GM12878 (cell line): ENCODE measurements at regions of chr13 and their contacts with region 1.

Region 1: GRCh38 chr13:102724923-102725322 is 30.1 kb upstream of the METTL21C start:
- DNase-seq: no peak
- ATAC-seq: peak; percentile 69
- H3K4me3 ChIP-seq: no peak overlapping the region
- H3K27ac ChIP-seq: no peak overlapping the region
- H3K4me1 ChIP-seq: no peaks in the 10 kb centered on the region
- H3K27me3 ChIP-seq: no peaks in the 10 kb centered on the region; a peak in 1 of 4 replicates
- CTCF ChIP-seq: peak; percentile 22 to 49 (median 38); a peak in 4 of 6 replicates
- EP300 ChIP-seq: no peak
- POLR2A ChIP-seq: no peak
- RAD21 ChIP-seq: peak; percentile 54

Region 2: GRCh38 chr13:102580552-102581169 is 144.3 kb before region 1 on chr13:
- CTCF ChIA-PET with region 1: interaction called, 6 read pairs
- POLR2A ChIA-PET with region 1: no interaction called
- RAD21 ChIA-PET with region 1: interaction called, 4 read pairs
- SMC1A ChIA-PET with region 1: interaction called, 7 read pairs
- in situ Hi-C with region 1: no loop called
- intact Hi-C with region 1: loop called (anchors 2 kb)
- DNase-seq: no peak
- ATAC-seq: peak; percentile 89
- H3K4me3 ChIP-seq: no peak overlapping the region
- H3K27ac ChIP-seq: no peak overlapping the region
- H3K4me1 ChIP-seq: peaks cover 6% of the 10 kb centered on the region
- H3K27me3 ChIP-seq: no peaks in the 10 kb centered on the region
- CTCF ChIP-seq: peak; percentile 68 to 79 (median 71)
- EP300 ChIP-seq: no peak
- POLR2A ChIP-seq: no peak
- RAD21 ChIP-seq: peak; percentile 90

Region 3: DNA sequence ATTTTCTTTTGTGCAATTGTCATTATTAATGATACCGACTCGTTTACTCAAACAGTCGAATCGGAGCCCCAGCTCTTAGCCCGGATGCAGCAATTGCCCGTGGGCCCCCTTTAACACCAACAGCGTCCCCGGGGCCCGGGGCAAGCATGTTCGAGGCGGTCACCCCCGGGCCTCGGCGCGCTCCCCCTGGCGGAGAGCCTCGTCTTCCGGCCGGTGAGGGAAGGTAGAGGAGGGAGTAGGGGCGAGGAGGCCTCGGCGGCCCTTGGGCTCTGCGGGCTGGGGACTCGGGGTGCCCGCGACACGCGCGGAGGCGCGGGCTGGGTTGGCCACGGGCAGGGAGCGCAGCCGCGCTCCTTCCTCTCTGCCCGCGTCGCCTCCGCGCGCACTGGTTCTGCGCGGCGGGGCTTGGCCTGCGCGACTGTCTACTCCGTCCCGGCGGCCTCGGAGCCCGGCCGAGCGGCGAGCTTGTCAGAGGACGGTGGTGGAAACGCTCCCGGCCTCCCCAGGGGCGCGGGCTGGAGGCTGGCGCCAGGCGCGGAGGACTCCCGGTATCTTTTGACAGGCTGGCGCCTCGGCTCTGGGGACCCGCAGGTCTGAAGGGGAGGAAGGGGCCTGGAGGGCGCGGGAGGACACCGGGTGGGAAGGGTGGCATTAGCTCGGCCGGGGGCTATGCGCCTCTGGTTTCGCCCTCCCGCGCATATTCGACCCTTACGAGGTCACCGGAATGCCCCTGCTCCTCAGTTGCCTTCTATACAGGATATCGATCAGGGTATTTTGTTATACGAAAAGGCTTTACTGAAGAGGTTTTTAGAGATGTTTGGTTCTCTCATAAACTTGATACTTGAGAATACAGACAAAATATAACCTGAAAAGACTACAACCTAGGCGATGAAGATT is 75.5 kb after region 1 on chr13:
- CTCF ChIA-PET with region 1: no interaction called
- POLR2A ChIA-PET with region 1: no interaction called
- RAD21 ChIA-PET with region 1: no interaction called
- SMC1A ChIA-PET with region 1: no interaction called
- in situ Hi-C with region 1: no loop called
- intact Hi-C with region 1: no loop called
- DNase-seq: no peak
- ATAC-seq: peak; percentile 87
- H3K4me3 ChIP-seq: peak overlapping the region; percentile 77
- H3K27ac ChIP-seq: peak overlapping the region; percentile 72
- H3K4me1 ChIP-seq: peaks cover 5% of the 10 kb centered on the region; the same call in 1 of the 2 replicates
- H3K27me3 ChIP-seq: no peaks in the 10 kb centered on the region
- CTCF ChIP-seq: peak; percentile 76 to 91 (median 83)
- EP300 ChIP-seq: no peak
- POLR2A ChIP-seq: peak; percentile 85
- RAD21 ChIP-seq: peak; percentile 61